ENCODE measurements at regions of chr1 and their contacts with region 1.

Region 1: GRCh38 chr1:86833461-86834215 is 80.3 kb downstream of the SELENOF start:
- DNase-seq: peak; percentile 73
- ATAC-seq: peak; percentile 99
- H3K4me3 ChIP-seq: no peak overlapping the region
- H3K27ac ChIP-seq: no peak overlapping the region
- H3K4me1 ChIP-seq: no peaks in the 10 kb centered on the region
- H3K27me3 ChIP-seq: no peaks in the 10 kb centered on the region
- CTCF ChIP-seq: peak; percentile 87

Region 2: DNA sequence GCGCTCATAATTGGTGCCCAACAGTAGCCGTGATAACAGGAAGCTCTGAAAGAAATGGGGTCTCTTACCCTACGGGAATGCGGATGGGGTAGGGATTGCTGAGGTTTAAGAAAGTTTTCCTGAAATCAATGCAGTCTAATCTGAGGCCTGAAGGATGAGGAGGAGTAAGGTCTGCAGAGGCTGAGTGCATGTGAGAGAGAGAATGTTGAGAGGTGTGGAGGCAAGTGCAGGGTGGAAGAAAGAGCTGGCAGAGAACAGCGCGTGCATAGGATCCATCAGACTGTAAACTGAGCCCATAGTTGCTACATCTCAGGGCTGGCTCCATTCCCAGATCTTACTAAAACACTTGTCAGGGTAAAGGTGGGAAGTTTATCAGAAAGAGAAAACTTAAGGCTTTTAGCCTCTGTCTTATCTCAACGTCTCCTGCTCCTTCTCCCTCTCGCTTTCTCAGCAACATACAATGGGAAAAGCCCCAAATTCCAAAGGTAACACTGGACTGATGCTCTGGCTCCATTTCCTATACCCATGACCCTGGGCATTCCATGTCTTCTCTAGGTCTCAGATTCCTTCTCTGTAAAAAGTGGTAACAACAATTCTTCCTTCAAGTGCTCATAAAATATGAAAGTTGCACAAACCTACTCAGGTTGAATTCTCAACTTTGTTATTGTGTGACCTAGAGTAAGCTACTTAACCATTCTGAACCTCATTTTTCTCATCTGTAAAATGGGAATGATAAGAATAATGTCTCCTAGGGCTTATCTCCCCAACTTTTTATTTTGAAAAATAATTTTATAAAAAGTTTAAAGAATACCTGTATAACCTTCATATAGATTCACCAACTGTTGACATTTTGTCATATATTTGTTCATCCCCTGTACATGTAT is 54.1 kb before region 1 on chr1:
- CTCF ChIA-PET with region 1: interaction called, 12 read pairs
- POLR2A ChIA-PET with region 1: no interaction called
- in situ Hi-C with region 1: no loop called
- intact Hi-C with region 1: no loop called
- DNase-seq: no peak
- ATAC-seq: peak; percentile 57
- H3K4me3 ChIP-seq: no peak overlapping the region
- H3K27ac ChIP-seq: no peak overlapping the region
- H3K4me1 ChIP-seq: no peaks in the 10 kb centered on the region
- H3K27me3 ChIP-seq: no peaks in the 10 kb centered on the region
- CTCF ChIP-seq: no peak

Region 3: DNA sequence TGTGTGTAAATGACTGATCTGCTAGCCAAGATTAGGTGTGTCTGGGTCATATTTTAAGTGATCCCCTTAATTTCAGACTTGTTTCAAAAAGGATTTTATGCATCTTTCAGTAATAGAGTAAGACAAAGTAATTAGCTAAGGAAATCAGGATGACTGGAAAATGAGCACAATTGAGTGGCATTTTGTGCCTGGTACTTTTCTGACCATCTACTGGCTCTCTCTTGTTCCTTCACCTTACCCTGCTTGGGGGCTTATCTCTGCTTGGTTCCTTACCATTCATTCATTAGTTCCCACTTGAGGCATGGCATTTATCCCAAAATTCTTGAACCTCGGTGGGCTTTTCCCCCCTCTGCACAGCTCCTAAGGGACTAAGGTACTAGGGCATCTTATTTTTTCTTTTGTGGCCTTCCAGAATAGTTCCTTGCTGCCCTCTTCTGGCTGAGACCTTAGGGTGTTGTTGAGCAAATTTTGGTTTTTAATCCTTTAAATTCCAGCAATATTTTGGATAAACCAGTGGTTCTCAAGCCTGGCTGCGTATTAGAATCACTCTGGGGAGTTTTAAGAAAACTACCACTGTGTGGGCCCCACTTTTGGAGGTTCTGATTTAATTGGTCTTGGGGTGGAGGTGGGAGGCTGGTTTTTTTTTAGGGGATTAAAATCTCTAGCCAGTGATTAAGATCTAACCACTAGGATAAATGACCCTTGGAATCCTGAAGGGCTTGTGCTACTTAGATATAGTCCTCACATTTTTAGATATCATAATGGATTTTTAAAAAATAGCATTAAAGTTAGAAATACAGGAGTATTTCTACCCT is 131.6 kb after region 1 on chr1:
- CTCF ChIA-PET with region 1: interaction called, 5 read pairs
- POLR2A ChIA-PET with region 1: no interaction called
- in situ Hi-C with region 1: no loop called
- intact Hi-C with region 1: loop called (anchors 2 kb)
- DNase-seq: peak; percentile 24
- ATAC-seq: peak; percentile 78
- H3K4me3 ChIP-seq: no peak overlapping the region
- H3K27ac ChIP-seq: no peak overlapping the region
- H3K4me1 ChIP-seq: no peaks in the 10 kb centered on the region
- H3K27me3 ChIP-seq: no peaks in the 10 kb centered on the region
- CTCF ChIP-seq: peak; percentile 87

Region 4: DNA sequence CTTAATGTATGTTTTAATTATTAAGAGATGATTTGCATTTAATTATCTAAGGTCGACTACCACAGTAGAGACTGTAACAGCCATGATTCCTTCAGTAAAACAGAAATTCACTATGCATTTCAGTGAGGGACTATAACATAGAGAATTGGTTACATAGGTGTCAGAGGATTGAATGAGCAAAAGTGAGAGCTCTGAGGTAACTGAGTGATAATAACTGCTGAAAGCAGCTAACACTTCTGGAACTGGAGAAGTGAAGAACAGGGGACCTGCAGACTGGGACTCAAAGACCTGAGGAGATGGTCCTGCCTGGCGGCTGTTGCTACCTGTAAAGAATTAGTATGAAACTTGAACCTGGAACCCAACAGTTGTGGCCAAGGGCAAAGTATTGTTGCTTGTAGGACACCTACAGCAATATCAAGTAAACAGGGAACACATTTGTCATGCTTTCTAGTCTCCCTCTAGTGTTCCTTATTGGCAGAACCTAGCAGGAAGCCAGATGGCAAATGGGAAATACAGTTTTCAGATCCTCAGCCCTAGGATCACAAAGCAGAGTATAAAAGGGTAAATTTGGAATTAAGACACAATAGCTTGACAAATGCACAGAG is 191.4 kb after region 1 on chr1:
- CTCF ChIA-PET with region 1: no interaction called
- POLR2A ChIA-PET with region 1: no interaction called
- in situ Hi-C with region 1: no loop called
- intact Hi-C with region 1: loop called (anchors 2 kb)
- DNase-seq: peak; percentile 47
- ATAC-seq: peak; percentile 96
- H3K4me3 ChIP-seq: no peak overlapping the region
- H3K27ac ChIP-seq: no peak overlapping the region
- H3K4me1 ChIP-seq: no peaks in the 10 kb centered on the region
- H3K27me3 ChIP-seq: no peaks in the 10 kb centered on the region
- CTCF ChIP-seq: peak; percentile 81

Region 5: GRCh38 chr1:87084244-87084836 is 250.7 kb after region 1 on chr1:
- CTCF ChIA-PET with region 1: interaction called, 3 read pairs
- POLR2A ChIA-PET with region 1: no interaction called
- in situ Hi-C with region 1: no loop called
- intact Hi-C with region 1: loop called (anchors 1 kb)
- DNase-seq: no peak
- ATAC-seq: peak; percentile 65
- H3K4me3 ChIP-seq: no peak overlapping the region
- H3K27ac ChIP-seq: no peak overlapping the region
- H3K4me1 ChIP-seq: no peaks in the 10 kb centered on the region
- H3K27me3 ChIP-seq: no peaks in the 10 kb centered on the region
- CTCF ChIP-seq: peak; percentile 69; the same call in 1 of the 2 replicates

Region 6: DNA sequence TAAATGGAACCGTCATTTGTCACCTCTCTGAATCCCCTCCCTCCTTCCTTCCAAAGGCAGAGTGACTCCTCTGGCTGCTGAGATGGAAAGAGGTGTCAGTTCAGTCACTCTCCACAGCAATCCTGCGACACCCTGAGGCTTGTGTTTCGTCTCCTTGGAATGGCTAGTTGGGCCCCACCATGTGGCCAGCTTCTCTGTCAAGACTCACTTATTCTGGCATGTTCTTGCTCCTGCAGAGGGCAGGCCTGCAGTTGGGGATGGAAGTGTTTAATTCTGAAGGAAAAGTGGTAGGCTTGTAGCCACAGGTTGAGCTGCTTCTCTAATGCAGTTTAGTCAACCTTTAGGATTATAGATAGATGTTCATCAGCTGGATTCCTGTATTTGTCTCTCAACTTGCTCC is 644.6 kb after region 1 on chr1:
- CTCF ChIA-PET with region 1: no interaction called
- POLR2A ChIA-PET with region 1: no interaction called
- in situ Hi-C with region 1: no loop called
- intact Hi-C with region 1: no loop called
- DNase-seq: no peak
- ATAC-seq: no peak
- H3K4me3 ChIP-seq: no peak overlapping the region
- H3K27ac ChIP-seq: no peak overlapping the region
- H3K4me1 ChIP-seq: peaks cover 4% of the 10 kb centered on the region; the same call in 1 of the 2 replicates
- H3K27me3 ChIP-seq: no peaks in the 10 kb centered on the region
- CTCF ChIP-seq: peak; percentile 25; the same call in 1 of the 2 replicates

Region 7: DNA sequence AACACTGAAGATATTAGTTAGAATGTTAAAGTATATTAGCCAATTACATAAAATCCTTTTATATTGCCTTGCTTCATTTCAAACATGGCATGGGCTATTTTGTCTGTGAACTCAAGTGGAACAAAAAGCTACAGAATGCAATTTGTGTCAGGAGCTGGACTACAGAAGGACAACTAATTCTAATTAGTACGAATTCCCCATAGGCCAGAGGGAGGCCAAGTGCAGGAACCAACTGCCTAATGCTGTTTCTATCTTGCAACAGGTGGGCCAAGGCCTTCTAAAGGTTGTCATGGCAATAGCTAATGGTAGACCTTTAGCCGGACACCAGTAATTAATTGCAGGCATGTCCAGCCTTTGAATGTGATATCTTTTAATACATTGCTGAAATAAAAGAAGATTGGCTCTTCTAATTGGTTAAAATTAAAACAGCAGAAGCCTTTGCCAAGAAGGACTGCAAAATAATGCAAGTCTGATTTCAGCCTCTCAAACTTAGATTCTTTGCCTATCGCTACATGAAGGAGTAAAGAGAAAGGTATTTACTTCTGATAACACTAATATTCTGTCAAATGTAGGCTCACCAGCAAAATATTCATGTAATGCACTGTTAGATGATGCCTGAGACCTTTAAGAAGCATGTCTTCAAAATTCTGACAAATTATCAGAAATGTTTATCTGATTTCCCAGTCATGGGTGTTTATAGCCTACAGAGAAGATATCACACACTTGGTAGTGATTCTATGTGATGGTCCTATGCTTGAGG is 727.1 kb after region 1 on chr1:
- CTCF ChIA-PET with region 1: no interaction called
- POLR2A ChIA-PET with region 1: no interaction called
- in situ Hi-C with region 1: no loop called
- intact Hi-C with region 1: no loop called
- DNase-seq: no peak
- ATAC-seq: no peak
- H3K4me3 ChIP-seq: no peak overlapping the region
- H3K27ac ChIP-seq: no peak overlapping the region
- H3K4me1 ChIP-seq: no peaks in the 10 kb centered on the region
- H3K27me3 ChIP-seq: no peaks in the 10 kb centered on the region
- CTCF ChIP-seq: no peak